ENCODE measurements at regions of chr2 and their contacts with region 1.

Region 1: DNA sequence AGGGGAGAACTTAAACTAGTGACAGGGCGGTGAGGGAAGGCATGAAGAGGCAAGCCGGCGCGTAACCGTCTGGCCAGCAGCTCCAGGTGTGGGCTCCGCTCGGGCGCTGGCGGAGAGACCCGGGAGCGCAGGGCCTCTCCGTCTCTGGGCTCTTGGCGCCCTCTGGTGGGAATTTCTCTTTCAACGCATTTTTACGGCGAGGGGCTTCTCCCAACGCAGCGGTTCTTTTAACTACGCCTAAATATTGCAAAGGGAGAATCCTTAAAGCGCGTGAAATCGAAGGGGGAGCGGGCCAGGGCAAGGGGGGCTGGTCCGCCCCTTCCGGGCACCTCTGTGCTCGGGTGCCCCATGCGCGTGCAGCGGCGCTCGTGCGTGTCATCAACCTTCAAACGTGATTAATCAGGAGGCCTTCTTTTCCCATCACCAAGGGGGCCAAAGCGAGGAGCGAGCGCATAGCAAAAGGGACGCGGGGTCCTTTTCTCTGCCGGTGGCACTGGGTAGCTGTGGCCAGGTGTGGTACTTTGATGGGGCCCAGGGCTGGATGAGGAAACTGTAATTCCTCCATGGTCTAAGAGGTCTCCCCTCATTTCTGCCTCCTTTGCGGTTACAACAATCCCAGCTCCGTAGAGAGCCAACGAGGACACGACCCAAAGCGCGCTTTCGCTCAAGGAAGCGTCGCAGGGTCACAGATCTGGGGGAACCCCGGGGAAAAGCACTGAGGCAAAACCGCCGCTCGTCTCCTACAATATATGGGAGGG is 762 bp upstream of the GAD1 start:
- DNase-seq: peak; percentile 90
- ATAC-seq: peak; percentile 38
- H3K4me3 Mint-ChIP-seq: peak overlapping the region; percentile 84
- H3K27ac Mint-ChIP-seq: no peak overlapping the region
- H3K4me1 Mint-ChIP-seq: peaks cover 59% of the 10 kb centered on the region
- H3K27me3 Mint-ChIP-seq: peaks cover 82% of the 10 kb centered on the region
- CTCF ChIP-seq: peak; percentile 74

Region 2: DNA sequence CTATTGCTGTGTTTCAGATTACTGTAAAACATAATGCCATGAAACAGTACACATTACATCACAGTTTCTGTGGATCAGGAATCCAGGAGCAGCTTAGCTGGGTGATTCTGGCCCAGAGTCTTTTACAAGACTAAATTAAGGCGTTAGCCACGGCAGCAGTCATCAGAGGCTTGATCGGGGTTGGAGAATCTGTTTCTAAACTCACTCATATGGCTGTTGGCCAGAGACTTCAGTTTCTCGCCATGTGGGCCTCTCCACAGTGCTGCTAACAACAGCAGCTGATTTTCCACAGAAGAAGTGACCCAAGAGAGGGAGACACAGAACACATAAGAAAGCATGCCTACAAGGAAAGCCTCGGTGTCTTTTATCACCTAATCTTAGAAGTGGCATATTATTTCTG is 727.1 kb before region 1 on chr2:
- CTCF ChIA-PET with region 1: no interaction called
- POLR2A ChIA-PET with region 1: no interaction called
- DNase-seq: no peak
- ATAC-seq: no peak
- H3K4me3 Mint-ChIP-seq: no peak overlapping the region
- H3K27ac Mint-ChIP-seq: no peak overlapping the region
- H3K4me1 Mint-ChIP-seq: peaks cover 12% of the 10 kb centered on the region
- H3K27me3 Mint-ChIP-seq: no peaks in the 10 kb centered on the region
- CTCF ChIP-seq: no peak

Region 3: GRCh38 chr2:170324640-170325046 is 491.3 kb before region 1 on chr2:
- CTCF ChIA-PET with region 1: interaction called, 21 read pairs
- POLR2A ChIA-PET with region 1: no interaction called
- DNase-seq: peak; percentile 74
- ATAC-seq: peak; percentile 89
- H3K4me3 Mint-ChIP-seq: no peak overlapping the region
- H3K27ac Mint-ChIP-seq: no peak overlapping the region
- H3K4me1 Mint-ChIP-seq: peaks cover 15% of the 10 kb centered on the region
- H3K27me3 Mint-ChIP-seq: no peaks in the 10 kb centered on the region; the same call in 1 of the 2 replicates
- CTCF ChIP-seq: peak; percentile 61

Region 4: DNA sequence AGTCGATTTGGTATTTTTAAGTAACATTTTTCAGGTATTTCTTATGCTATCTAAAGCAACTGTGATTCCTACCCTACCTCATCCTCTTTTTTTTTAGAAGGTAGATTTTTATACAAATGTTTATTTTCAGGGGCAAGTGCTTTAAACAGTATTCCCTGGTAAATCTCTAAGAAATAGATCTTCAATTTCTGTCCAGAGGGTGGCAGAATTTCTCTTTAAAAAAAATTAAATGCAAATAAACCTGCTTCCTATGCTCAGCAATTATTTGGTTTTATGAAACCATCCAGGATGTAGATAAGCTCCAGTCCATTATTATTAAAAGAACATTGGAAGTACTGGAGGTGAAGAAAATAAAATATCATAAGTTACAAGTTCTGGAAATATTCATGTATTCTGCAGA is 446.0 kb before region 1 on chr2:
- CTCF ChIA-PET with region 1: interaction called, 41 read pairs
- POLR2A ChIA-PET with region 1: no interaction called
- DNase-seq: no peak
- ATAC-seq: no peak
- H3K4me3 Mint-ChIP-seq: no peak overlapping the region
- H3K27ac Mint-ChIP-seq: no peak overlapping the region
- H3K4me1 Mint-ChIP-seq: peaks cover 56% of the 10 kb centered on the region
- H3K27me3 Mint-ChIP-seq: peaks cover 7% of the 10 kb centered on the region
- CTCF ChIP-seq: no peak

Region 5: GRCh38 chr2:170409164-170409535 is 406.8 kb before region 1 on chr2:
- CTCF ChIA-PET with region 1: interaction called, 76 read pairs
- POLR2A ChIA-PET with region 1: interaction called, 3 read pairs
- DNase-seq: peak; percentile 80
- ATAC-seq: peak; percentile 73
- H3K4me3 Mint-ChIP-seq: peak overlapping the region; percentile 40; the same call in 1 of the 2 replicates
- H3K27ac Mint-ChIP-seq: no peak overlapping the region
- H3K4me1 Mint-ChIP-seq: peaks cover 18% of the 10 kb centered on the region
- H3K27me3 Mint-ChIP-seq: no peaks in the 10 kb centered on the region; the same call in 1 of the 2 replicates
- CTCF ChIP-seq: peak; percentile 95

Region 6: GRCh38 chr2:170715062-170715931 is 100.6 kb before region 1 on chr2 and contains the start of gene SP5:
- CTCF ChIA-PET with region 1: interaction called, 92 read pairs
- POLR2A ChIA-PET with region 1: no interaction called
- DNase-seq: peak; percentile 66
- ATAC-seq: peak; percentile 17
- H3K4me3 Mint-ChIP-seq: peak within 1 kb of the TSS; percentile 75
- H3K27ac Mint-ChIP-seq: no peak within 1 kb of the TSS
- H3K4me1 Mint-ChIP-seq: peaks cover 52% of the 10 kb centered on the region
- H3K27me3 Mint-ChIP-seq: peaks cover 100% of the 10 kb centered on the region
- CTCF ChIP-seq: no peak
- total RNA-seq, gene SP5: 1.7 to 9.7 TPM (median 7.0 TPM) in 3 replicates

Region 7: GRCh38 chr2:171018522-171018921 is 202.6 kb after region 1 on chr2:
- CTCF ChIA-PET with region 1: no interaction called
- POLR2A ChIA-PET with region 1: no interaction called
- DNase-seq: no peak
- ATAC-seq: no peak
- H3K4me3 Mint-ChIP-seq: no peak overlapping the region
- H3K27ac Mint-ChIP-seq: peak overlapping the region; percentile 55
- H3K4me1 Mint-ChIP-seq: peaks cover 5% of the 10 kb centered on the region; the same call in 1 of the 2 replicates
- H3K27me3 Mint-ChIP-seq: no peaks in the 10 kb centered on the region
- CTCF ChIP-seq: no peak